Activated T-helper 1 cell treated with anti-CD3 and anti-CD28 coated beads, Interleukin-12 subunit alpha, Interleukin-12 subunit beta, Interleukin-2, Interleukin-4 antibody, amounts not matched to agents 30 ng/mL and 10 ng/mL and 1 ng/mL, durations not matched to agents 14 hours and 24 hours and 36 hours (primary cell): ENCODE measurements at regions of chr10 and their contacts with region 1.

Region 1: GRCh38 chr10:8577686-8578085 is 523.2 kb downstream of the GATA3 start:
- DNase-seq: no peak
- H3K4me3 Mint-ChIP-seq: peak overlapping the region; percentile 27
- H3K27ac Mint-ChIP-seq: peak overlapping the region; percentile 64
- H3K4me1 Mint-ChIP-seq: peaks cover 40% of the 10 kb centered on the region
- H3K27me3 Mint-ChIP-seq: peaks cover 3% of the 10 kb centered on the region

Region 2: GRCh38 chr10:8056871-8057331 is 520.8 kb before region 1 on chr10:
- intact Hi-C with region 1: no loop called
- DNase-seq: peak; percentile 34
- H3K4me3 Mint-ChIP-seq: peak overlapping the region; percentile 98
- H3K27ac Mint-ChIP-seq: peak overlapping the region; percentile 95
- H3K4me1 Mint-ChIP-seq: peaks cover 70% of the 10 kb centered on the region
- H3K27me3 Mint-ChIP-seq: peaks cover 16% of the 10 kb centered on the region

Region 3: GRCh38 chr10:8416192-8416701 is 161.4 kb before region 1 on chr10:
- intact Hi-C with region 1: loop called (anchors 1 kb)
- DNase-seq: peak; percentile 16
- H3K4me3 Mint-ChIP-seq: peak overlapping the region; percentile 9
- H3K27ac Mint-ChIP-seq: peak overlapping the region; percentile 85
- H3K4me1 Mint-ChIP-seq: peaks cover 36% of the 10 kb centered on the region
- H3K27me3 Mint-ChIP-seq: peaks cover 9% of the 10 kb centered on the region